ENCODE measurements at regions of chr11 and their contacts with region 1.

Region 1: DNA sequence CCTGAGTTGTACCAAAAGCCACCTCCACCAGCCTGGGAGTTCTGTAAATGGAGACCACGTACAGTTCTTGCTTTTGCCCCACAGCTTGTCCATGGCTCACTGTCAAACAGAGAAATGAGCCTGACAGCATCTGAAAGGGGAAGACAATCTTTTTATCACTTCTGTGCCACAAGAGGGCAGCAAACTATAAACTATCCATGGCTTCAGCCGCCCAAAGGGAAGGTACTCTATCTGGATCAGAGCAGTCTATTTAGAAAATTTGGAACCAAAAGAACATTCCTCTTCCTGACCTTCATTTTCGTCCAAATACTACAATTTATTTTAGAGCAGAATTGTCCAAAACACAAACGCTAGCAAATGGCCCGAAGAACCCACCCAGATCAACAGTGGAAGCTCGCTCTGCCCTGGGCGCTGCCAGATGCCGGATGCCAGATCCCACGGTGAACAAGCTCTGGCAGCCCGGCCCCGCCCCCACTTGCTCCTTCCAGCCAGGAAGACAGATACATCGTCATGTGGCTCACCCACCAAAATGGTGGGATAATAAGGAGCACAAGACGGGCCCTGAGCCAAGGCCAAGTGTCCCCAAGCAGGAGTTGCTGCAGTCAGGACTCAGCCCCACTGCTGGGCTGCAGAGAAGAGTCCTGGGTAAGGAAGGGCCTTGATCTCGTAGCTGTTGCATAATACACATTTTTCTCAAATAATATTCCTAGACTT is 23.9 kb upstream of the SCGB1A1 start:
- DNase-seq: peak; percentile 86
- H3K4me3 ChIP-seq: peak overlapping the region; percentile 20 to 71 (median 38)
- H3K27ac ChIP-seq: peak overlapping the region; percentile 15
- H3K4me1 ChIP-seq: peaks cover 4% of the 10 kb centered on the region
- H3K27me3 ChIP-seq: no peaks in the 10 kb centered on the region
- CTCF ChIP-seq: peak; percentile 47 to 56
- POLR2A ChIP-seq: no peak

Region 2: DNA sequence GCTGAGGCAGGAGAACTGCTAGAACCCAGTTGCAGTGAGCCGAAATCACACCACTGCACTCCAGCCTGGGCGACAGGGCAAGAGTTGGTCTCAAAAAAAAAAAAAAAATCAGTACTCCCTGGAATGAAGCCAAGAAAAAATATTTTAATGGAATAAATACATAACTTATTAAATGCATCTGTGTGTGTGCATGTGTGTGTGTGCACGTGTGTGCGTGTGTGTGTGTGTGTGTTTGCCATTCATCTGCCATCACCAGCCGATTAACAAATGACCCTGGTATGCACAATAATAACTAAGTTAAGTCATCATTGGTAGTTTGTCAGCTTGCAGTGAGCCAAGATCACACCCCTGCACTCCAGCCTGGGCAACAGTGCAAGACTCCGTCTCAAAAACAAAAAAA is 11.2 kb before region 1 on chr11:
- CTCF ChIA-PET with region 1: interaction called, 7 read pairs
- POLR2A ChIA-PET with region 1: no interaction called
- dilution Hi-C with region 1: no loop called
- intact Hi-C with region 1: loop called (anchors 1 kb)
- DNase-seq: no peak
- H3K4me3 ChIP-seq: no peak overlapping the region
- H3K27ac ChIP-seq: no peak overlapping the region
- H3K4me1 ChIP-seq: no peaks in the 10 kb centered on the region
- H3K27me3 ChIP-seq: no peaks in the 10 kb centered on the region
- CTCF ChIP-seq: no peak
- POLR2A ChIP-seq: no peak

Region 3: GRCh38 chr11:62542750-62543567 is 148.0 kb after region 1 on chr11:
- CTCF ChIA-PET with region 1: interaction called, 122 read pairs
- POLR2A ChIA-PET with region 1: no interaction called
- dilution Hi-C with region 1: no loop called
- intact Hi-C with region 1: loop called (anchors 1 kb)
- DNase-seq: peak; percentile 75
- H3K4me3 ChIP-seq: peak overlapping the region in 2 of 3 experiments; percentile 53 to 55
- H3K27ac ChIP-seq: peak overlapping the region; percentile 12
- H3K4me1 ChIP-seq: peaks cover 64% of the 10 kb centered on the region
- H3K27me3 ChIP-seq: no peaks in the 10 kb centered on the region
- CTCF ChIP-seq: peak; percentile 98 to 100
- POLR2A ChIP-seq: no peak

Region 4: DNA sequence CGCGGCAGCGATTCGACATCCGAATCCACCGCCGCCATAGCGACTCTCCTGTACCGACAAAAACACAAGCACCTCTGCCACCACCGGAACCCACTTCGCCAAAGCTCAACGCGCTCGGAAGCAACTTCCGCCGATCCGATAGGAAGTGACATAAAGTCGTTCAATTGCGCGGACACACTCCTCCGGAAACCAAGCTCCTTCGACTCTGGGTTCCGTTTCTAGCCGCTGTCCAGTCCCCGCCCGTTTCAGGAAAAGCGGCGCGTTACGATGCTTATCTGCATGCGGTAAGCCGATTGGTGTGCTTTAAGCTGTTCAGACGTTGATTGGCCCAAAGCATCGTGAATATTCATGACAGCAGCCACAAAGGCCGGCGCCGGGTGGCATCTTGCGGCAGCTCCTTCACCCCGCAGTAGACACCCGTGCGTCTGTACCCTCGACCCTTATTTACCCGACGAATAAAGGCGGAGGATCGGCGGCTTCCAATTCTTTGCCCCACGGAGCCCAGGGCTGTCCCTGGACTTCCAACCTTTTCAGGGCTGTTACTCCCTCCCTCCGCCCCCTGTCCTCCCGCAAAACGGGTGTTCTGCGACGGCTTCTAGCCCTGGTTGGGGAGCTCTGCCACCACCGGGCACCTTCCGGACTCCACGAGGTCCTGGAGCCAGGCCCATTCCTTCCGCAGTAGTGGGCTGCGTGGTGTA is 196.6 kb after region 1 on chr11 and contains the start of gene TUT1:
- CTCF ChIA-PET with region 1: interaction called, 39 read pairs
- POLR2A ChIA-PET with region 1: interaction called, 4 read pairs
- dilution Hi-C with region 1: no loop called
- intact Hi-C with region 1: no loop called
- DNase-seq: peak; percentile 99
- H3K4me3 ChIP-seq: peak within 1 kb of the TSS; percentile 67 to 87 (median 82)
- H3K27ac ChIP-seq: peak within 1 kb of the TSS; percentile 82
- H3K4me1 ChIP-seq: peaks cover 18% of the 10 kb centered on the region
- H3K27me3 ChIP-seq: no peaks in the 10 kb centered on the region
- CTCF ChIP-seq: no peak
- POLR2A ChIP-seq: peak; percentile 99
- total RNA-seq, gene TUT1: 16.9 and 17.8 TPM in 2 replicates

Region 5: DNA sequence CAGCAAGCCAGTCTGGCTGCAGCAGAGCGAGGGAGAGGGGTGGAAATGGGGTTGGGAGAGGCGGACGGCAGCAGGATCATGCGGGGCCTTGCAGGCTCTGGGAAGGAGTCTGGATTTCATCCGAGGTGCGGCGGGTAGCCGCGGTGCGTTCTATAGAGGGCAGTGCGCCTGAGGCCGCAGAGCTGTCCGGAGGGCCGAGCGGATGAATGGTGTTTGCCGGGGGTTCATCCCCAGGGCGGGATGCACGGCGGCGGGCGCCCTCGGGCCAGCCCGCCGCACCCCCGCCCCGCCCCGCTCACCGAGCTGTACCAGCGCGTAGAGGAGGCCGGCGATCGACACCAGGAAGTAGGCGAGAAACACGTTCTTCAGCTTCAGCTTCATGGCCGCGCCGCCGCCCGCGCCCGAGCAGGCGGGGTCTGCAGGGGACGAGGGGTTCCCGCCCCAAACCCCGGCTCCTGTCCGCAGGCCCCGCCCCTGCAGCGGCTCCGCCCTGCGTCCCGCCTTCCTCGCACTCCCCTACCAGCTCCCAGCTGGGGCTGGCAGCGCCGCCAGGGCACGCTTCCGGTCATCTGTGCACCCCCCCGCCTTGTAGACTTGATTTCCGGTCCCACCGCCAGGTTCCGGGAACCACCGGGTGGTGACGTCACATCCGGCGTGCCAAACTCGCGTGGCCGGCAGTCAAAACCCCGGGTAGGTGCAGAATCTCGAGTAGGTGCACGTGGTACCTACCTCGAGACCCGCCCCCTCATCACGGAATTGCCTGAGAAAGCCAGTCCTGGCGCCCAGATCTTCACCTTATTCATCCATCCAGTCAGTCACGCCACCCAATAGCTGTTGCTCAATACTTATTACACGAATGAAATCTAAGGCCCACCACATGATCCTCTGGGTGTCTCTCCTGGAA is 226.8 kb after region 1 on chr11 and contains the start of gene B3GAT3:
- CTCF ChIA-PET with region 1: interaction called, 10 read pairs
- POLR2A ChIA-PET with region 1: no interaction called
- dilution Hi-C with region 1: no loop called
- intact Hi-C with region 1: no loop called
- DNase-seq: peak; percentile 96
- H3K4me3 ChIP-seq: peak within 1 kb of the TSS; percentile 14 to 80 (median 66)
- H3K27ac ChIP-seq: peak within 1 kb of the TSS; percentile 88
- H3K4me1 ChIP-seq: peaks cover 15% of the 10 kb centered on the region
- H3K27me3 ChIP-seq: no peaks in the 10 kb centered on the region
- CTCF ChIP-seq: no peak
- POLR2A ChIP-seq: peak; percentile 95
- total RNA-seq, gene B3GAT3: 31.6 and 35.0 TPM in 2 replicates

Region 6: DNA sequence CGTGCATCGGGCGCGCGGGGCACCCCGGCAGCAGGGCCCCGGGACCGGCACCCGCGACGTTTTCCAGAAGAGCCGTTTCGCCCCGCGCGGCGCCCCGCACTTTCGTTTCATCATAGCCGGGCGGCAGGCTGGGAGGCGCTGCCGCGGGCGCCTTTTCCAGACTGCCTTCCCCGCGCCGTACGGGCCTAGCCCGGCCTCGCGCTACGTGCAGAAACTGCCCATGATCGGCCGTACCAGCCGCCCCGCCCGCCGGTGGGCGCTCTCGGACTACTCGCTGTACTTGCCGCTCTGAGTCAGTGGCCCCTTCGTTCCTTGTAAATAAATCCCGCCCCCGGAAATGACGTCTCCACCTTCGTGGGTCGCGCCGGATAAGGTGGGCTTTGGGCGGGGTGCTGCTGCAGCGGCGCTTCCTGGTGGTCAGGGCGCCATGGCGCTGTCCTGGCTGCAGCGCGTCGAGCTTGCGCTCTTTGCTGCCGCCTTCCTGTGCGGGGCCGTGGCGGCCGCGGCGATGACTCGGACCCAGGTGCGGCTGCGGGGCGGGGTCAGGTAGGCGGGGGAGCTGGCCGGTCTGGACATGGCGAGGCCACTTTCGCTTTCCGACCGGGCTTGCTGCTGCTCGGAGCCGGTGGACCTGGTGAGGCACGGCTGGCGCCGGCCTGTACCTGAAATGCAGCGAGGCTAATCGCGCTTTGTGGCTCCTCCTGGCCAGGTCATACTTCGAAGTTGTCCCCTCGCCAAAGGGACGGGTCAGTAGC is 392.2 kb after region 1 on chr11 and contains the start of gene TMEM179B:
- CTCF ChIA-PET with region 1: interaction called, 11 read pairs
- POLR2A ChIA-PET with region 1: no interaction called
- dilution Hi-C with region 1: no loop called
- intact Hi-C with region 1: no loop called
- DNase-seq: peak; percentile 97
- H3K4me3 ChIP-seq: peak within 1 kb of the TSS; percentile 1 to 95 (median 43)
- H3K27ac ChIP-seq: peak within 1 kb of the TSS; percentile 32
- H3K4me1 ChIP-seq: peaks cover 14% of the 10 kb centered on the region
- H3K27me3 ChIP-seq: no peaks in the 10 kb centered on the region
- CTCF ChIP-seq: peak; percentile 62 to 83
- POLR2A ChIP-seq: peak; percentile 97
- total RNA-seq, gene TMEM179B: 27.6 and 27.8 TPM in 2 replicates

Measured in endothelial cell of umbilical vein (primary cell).